ENCODE measurements at regions of chr1 and their contacts with region 1.

Region 1: GRCh38 chr1:173202430-173203145 is 4.5 kb downstream of the TNFSF4 start:
- DNase-seq: peak in 5 of 7 donors; percentile 31 to 52 (median 41)
- H3K4me3 ChIP-seq: no peak overlapping the region
- H3K27ac ChIP-seq: no peak overlapping the region
- H3K4me1 ChIP-seq: peaks cover 9 to 25% of the 10 kb centered on the region in 2 donors
- H3K27me3 ChIP-seq: no peaks in the 10 kb centered on the region
- CTCF ChIP-seq: peak; percentile 44 to 83 (median 72)
- POLR2A ChIP-seq: no peak

Region 2: DNA sequence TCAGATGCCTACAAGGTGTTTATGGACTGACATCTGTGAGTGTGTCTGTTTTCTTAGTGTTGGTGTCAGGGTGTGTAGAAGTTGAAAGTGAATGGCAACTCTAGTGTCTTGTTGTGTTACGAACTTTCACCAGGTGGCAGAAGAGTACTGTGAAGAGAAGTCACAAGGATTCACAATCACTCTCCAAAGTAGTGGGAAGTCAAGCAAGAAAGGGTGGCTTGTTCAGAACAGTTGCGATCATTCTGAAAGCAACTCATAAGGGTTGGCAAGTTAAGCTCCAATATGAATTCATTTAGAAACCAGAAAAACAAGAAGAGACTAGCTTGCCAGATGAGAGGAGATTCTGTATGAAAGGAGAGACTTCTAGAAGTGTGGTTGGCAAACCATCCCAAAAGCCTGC is 457.6 kb before region 1 on chr1:
- intact Hi-C with region 1: loop called (anchors 5 to 10 kb)
- DNase-seq: peak in 5 of 7 donors; percentile 25 to 45 (median 36)
- H3K4me3 ChIP-seq: no peak overlapping the region
- H3K27ac ChIP-seq: no peak overlapping the region
- H3K4me1 ChIP-seq: peaks cover 0 to 18% of the 10 kb centered on the region in 2 donors
- H3K27me3 ChIP-seq: peaks cover 11% of the 10 kb centered on the region
- CTCF ChIP-seq: peak; percentile 40 to 80 (median 63)
- POLR2A ChIP-seq: no peak

Region 3: DNA sequence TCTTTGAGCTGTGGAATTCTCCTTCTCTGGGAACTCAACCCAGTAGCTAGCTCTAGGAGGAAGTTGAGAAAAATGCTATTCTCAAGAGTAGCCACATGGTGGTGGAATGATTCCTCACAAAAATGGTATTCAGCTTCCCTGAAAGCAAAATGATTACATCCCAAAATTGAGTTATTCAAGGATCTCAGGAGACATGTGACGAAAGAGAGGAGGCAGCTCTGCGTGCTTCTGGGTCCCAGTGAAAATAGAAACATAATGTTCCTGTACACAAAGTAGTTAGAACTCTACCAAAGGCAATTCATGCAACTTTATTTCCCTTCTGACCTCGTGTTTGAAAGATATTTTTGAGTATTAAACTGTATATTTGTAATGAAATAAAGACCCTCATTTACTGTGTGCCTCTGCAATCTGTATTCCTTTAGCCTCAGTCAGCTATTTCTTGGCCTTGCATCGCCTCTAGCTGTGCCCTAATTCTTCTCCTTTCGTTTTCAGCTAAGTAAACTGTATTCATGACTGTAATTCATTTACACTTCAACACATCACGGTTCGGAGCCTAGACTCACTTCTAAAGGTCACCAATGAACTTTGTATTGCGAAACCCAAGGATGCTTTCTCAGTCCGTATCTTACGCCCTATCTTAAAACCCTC is 376.4 kb before region 1 on chr1:
- intact Hi-C with region 1: loop called (anchors 5 to 10 kb)
- DNase-seq: peak; percentile 21 to 71 (median 36)
- H3K4me3 ChIP-seq: peak overlapping the region in 1 of 4 donors; percentile 46
- H3K27ac ChIP-seq: peak overlapping the region in 2 of 5 donors; percentile 53 to 59
- H3K4me1 ChIP-seq: peaks cover 0 to 7% of the 10 kb centered on the region in 2 donors
- H3K27me3 ChIP-seq: no peaks in the 10 kb centered on the region
- CTCF ChIP-seq: peak; percentile 35 to 80 (median 66)
- POLR2A ChIP-seq: no peak

Region 4: DNA sequence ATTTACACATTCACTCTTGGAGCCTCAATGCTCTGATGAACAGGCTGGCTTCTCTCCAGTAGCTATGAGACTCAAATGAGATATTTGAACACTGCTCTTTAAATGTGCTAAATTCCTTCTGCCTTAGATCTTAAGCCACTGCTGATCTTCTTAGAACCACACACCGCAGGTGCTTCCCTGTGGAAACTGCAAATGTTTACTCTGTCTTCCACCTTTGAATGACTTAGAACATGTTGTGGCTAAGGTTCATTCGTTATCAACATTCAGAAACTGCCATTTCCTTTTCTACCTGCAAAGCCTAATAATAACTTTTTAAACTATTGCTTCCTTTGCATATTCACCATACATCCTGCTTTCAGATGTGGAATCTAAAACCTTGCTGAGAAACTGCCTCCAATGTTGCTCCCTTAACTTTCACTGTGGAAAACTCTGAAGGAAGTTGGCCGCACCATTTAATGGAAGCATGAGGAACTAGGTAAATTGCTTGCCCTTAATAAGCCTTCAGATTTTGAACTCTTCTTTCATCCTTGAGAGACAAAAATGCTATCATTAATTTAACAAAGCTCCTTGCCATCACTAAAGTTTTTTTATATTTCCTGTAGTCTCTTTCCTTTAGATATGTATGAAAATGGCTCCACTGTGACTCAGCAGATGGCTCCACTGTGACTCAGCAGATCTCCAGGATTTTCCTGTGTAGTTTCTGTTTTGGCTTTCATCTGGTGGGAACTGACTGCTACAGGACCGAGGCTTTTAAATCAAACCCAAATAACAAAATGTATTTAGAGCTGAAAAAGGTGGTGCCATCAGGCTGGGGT is 295.6 kb before region 1 on chr1:
- intact Hi-C with region 1: no loop called
- DNase-seq: peak in 5 of 7 donors; percentile 13 to 57 (median 21)
- H3K4me3 ChIP-seq: no peak overlapping the region
- H3K27ac ChIP-seq: no peak overlapping the region
- H3K4me1 ChIP-seq: no peaks in the 10 kb centered on the region
- H3K27me3 ChIP-seq: no peaks in the 10 kb centered on the region
- CTCF ChIP-seq: no peak
- POLR2A ChIP-seq: no peak

Region 5: DNA sequence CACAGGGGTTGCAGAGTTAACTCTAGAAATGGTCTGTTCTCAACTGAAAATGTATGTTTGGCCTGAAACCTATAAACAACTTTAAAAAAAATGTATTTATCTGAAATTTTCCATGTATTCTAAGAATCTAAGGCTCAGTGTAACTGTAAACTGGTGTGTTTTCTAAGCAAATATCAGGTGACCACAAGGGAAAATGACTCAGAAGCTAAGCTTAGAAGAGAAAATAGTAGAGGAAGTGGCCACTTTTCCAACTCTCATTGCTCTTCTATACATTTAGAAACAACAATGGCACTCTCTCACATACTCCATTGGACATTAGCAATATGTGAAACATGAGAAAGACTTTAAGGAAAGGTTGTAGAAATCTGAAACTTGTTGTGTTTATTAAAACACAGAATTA is 159.3 kb before region 1 on chr1:
- intact Hi-C with region 1: no loop called
- DNase-seq: no peak
- H3K4me3 ChIP-seq: no peak overlapping the region
- H3K27ac ChIP-seq: no peak overlapping the region
- H3K4me1 ChIP-seq: no peaks in the 10 kb centered on the region
- H3K27me3 ChIP-seq: no peaks in the 10 kb centered on the region
- CTCF ChIP-seq: no peak
- POLR2A ChIP-seq: no peak